ENCODE measurements at regions of chr4 and their contacts with region 1.

Region 1: DNA sequence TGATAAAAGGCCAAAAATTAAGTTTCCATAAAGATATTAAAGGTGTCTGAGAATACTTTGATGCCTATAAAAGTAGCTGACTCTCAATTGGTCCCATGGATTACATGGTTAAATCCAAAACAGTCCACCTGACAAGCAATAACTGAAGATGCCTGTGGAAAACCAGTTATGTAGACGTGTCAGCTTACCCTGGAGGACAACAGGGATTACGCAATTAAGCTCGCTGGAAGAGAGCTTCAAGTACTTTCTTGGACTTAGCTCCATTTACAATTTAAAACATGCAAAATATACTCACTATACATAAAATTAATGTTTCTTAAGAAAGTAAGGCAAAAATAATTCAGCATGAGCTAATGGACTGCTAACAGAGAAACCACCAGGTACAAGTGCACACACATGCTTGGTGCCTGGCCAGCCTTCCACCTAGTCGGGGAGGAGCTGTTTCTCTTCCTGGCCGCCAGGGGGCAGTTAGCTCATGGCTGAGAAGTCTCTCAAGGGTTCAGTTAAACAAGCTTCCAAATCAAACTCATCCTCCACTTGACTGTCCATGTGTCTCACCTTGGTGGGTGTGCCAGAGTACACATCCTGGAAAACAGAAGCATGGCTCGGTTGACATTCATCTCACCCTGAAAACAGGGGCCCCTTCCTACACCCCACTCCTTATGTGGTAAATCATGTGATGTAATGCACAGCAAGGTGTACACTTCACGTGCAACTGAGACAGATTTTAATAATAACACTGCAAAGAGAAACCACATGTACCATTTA is 9.2 kb upstream of the FAM53A start:
- DNase-seq: peak; percentile 78
- H3K4me3 ChIP-seq: no peak overlapping the region; a peak in 1 of 4 replicates
- H3K27ac ChIP-seq: no peak overlapping the region
- H3K4me1 ChIP-seq: no peaks in the 10 kb centered on the region
- H3K27me3 ChIP-seq: no peaks in the 10 kb centered on the region
- CTCF ChIP-seq: peak; percentile 93
- EP300 ChIP-seq: no peak
- RAD21 ChIP-seq: peak; percentile 75

Region 2: DNA sequence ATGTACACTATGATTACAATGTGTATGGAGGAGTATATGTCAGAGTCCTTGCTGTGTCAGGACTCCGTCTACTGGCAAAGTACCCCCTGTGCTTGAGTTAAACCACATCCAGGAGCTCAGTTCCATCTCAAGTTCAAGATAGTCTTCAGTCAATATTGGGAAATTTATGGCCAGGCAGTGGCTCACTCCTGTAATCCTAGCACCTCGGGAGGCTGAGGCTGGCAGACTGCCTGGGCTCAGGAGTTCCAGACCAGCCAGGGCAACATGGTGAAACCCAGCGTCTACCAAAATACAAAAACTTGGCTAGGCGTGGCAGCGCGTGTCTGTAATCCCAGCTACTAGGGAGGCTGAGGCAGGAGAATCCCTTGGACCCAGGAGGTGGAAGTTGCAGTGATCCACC is 13.0 kb after region 1 on chr4:
- CTCF ChIA-PET with region 1: interaction called, 82 read pairs
- POLR2A ChIA-PET with region 1: interaction called, 3 read pairs
- DNase-seq: no peak
- H3K4me3 ChIP-seq: no peak overlapping the region
- H3K27ac ChIP-seq: no peak overlapping the region
- H3K4me1 ChIP-seq: peaks cover 8 to 18% of the 10 kb centered on the region in 2 experiments; a peak in 2 of 4 replicates
- H3K27me3 ChIP-seq: no peaks in the 10 kb centered on the region
- CTCF ChIP-seq: no peak
- EP300 ChIP-seq: no peak
- RAD21 ChIP-seq: no peak

Region 3: GRCh38 chr4:1712216-1713002 is 19.1 kb after region 1 on chr4 and contains the start of gene SLBP:
- CTCF ChIA-PET with region 1: interaction called, 232 read pairs
- POLR2A ChIA-PET with region 1: interaction called, 4 read pairs
- DNase-seq: peak; percentile 97
- H3K4me3 ChIP-seq: peak within 1 kb of the TSS; percentile 77 to 97
- H3K27ac ChIP-seq: peak within 1 kb of the TSS; percentile 90 to 97
- H3K4me1 ChIP-seq: peaks cover 14 to 23% of the 10 kb centered on the region in 2 experiments; a peak in 2 of 4 replicates
- H3K27me3 ChIP-seq: no peaks in the 10 kb centered on the region
- CTCF ChIP-seq: no peak
- EP300 ChIP-seq: peak in 1 of 2 experiments; percentile 38; a peak in 1 of 4 replicates
- RAD21 ChIP-seq: no peak
- polyA plus RNA-seq, gene SLBP: 51.5 and 64.3 TPM in 2 replicates

Region 4: DNA sequence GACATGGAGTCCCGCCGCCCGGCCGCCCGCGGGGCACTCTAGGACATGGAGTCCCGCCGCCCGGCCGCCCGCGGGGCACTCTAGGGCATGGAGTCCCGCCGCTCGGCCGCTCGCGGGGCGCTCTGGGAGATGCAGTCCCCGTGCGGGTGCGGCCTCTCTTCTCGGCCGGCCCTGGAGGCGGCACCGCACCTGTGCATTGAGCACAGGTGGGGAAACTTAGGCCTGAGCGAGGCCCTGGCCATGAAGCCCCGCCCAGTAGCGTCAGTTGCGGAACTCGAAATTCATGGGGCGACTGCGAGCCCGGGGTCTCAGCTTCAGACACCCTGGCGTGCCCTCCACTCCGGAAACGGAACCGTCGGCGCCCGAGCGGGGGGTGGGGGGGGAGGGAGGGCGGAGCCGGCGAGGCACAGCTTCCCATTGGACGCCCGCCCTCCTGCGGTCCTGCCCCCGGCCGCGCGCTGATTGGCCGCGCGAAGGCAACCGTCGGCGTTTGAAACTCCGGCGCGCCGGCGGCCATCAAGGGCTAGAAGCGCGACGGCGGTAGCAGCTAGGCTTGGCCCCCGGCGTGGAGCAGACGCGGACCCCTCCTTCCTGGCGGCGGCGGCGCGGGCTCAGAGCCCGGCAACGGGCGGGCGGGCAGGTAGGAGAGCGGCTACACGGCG is 27.8 kb after region 1 on chr4 and contains the starts of genes TACC3 and TMEM129:
- CTCF ChIA-PET with region 1: interaction called, 232 read pairs
- POLR2A ChIA-PET with region 1: interaction called, 8 read pairs
- DNase-seq: peak; percentile 99
- H3K4me3 ChIP-seq: peak within 1 kb of the TSS; percentile 70 to 82
- H3K27ac ChIP-seq: peak within 1 kb of the TSS; percentile 66 to 91
- H3K4me1 ChIP-seq: peaks cover 9 to 45% of the 10 kb centered on the region in 2 experiments; a peak in 2 of 4 replicates
- H3K27me3 ChIP-seq: no peaks in the 10 kb centered on the region
- CTCF ChIP-seq: no peak
- EP300 ChIP-seq: no peak
- RAD21 ChIP-seq: no peak
- polyA plus RNA-seq, gene TACC3: 29.2 and 49.5 TPM in 2 replicates
- polyA plus RNA-seq, gene TMEM129: 36.5 and 43.9 TPM in 2 replicates

Region 5: GRCh38 chr4:1732911-1733310 is 39.6 kb after region 1 on chr4:
- CTCF ChIA-PET with region 1: interaction called, 232 read pairs
- POLR2A ChIA-PET with region 1: interaction called, 7 read pairs
- DNase-seq: no peak
- H3K4me3 ChIP-seq: no peak overlapping the region
- H3K27ac ChIP-seq: no peak overlapping the region
- H3K4me1 ChIP-seq: peaks cover 4% of the 10 kb centered on the region in 2 experiments; a peak in 3 of 4 replicates
- H3K27me3 ChIP-seq: no peaks in the 10 kb centered on the region
- CTCF ChIP-seq: no peak
- EP300 ChIP-seq: no peak
- RAD21 ChIP-seq: no peak

Measured in SK-N-SH (cell line).